ENCODE measurements at regions of chr5 and their contacts with region 1.

Region 1: DNA sequence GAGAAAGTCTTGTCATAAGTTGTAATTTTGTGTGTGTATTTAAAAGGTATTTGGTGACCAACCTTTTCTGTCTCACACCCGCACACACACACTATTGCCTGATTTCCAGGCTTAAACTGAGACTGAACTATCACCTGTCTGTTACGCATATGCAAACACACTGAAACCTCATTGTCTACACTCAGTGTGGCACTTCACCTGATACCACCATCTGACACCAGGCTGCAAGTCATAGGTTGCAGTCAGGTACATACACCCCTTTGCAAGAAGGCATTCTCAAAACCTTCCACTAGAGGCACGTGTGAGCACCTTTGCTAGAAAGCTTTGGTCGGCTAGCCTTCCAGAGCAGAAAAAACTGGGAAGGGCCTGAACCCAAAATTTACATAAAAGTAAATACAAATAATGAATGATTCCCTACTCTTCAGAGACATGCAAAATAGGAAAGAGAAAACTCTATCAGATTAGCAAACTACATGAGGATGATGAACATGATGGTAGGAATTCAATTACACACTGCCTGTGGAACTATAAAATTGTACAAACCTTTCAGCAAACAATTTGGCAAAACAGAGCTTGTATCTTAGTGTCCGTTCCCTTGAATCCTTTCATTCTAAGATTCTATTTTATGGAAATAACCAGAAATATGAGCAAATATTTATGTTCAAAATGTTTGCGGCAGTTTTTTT is 5.9 kb upstream of the FOXD1 start:
- DNase-seq: peak; percentile 67
- ATAC-seq: peak; percentile 88
- H3K4me3 ChIP-seq: no peak overlapping the region
- H3K27ac ChIP-seq: no peak overlapping the region
- H3K4me1 ChIP-seq: peaks cover 12% of the 10 kb centered on the region; the same call in 1 of the 2 replicates
- H3K27me3 ChIP-seq: peaks cover 6 to 50% of the 10 kb centered on the region in 2 experiments
- CTCF ChIP-seq: peak; percentile 69
- EP300 ChIP-seq: no peak
- POLR2A ChIP-seq: no peak
- RAD21 ChIP-seq: no peak

Region 2: DNA sequence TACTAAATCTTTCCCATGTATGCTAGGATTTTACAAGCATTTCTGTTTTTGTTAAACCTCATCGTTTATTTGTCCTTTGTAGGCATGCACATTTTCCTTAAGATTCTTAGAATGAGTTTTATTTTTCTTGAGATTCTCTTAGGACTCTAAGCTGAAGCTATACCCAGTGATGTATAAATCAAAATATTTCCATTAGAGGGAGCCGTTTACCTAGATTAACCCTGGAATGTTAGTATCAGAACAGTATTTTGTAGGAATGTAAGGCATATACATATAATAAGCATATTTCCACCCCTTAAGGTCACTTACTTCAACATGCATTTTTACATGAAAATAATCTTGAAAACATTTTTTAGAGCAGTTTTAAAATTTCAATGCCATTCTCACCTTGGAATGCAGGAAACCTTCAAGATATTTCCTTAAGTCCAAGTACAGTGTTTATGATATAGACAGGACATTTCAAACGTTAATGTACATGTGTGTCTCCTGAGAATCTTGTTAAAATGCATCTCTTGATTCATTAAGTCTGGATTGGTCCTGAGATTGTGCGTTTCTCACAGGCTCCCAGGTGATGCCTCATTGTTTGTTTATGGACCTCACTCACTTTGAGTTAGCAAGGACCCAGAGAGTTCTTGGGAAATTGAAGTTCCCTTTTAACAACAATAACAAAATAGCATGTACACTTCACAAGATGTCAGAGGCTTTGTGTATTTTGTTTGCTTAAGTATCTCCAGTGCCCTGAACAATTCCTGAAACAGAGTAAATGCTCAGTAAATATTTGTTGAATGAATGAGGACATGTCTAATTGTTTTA is 533.6 kb before region 1 on chr5:
- CTCF ChIA-PET with region 1: no interaction called
- POLR2A ChIA-PET with region 1: no interaction called
- in situ Hi-C with region 1: no loop called
- intact Hi-C with region 1: loop called (anchors 5 kb)
- DNase-seq: no peak
- ATAC-seq: peak; percentile 68
- H3K4me3 ChIP-seq: no peak overlapping the region
- H3K27ac ChIP-seq: no peak overlapping the region
- H3K4me1 ChIP-seq: no peaks in the 10 kb centered on the region
- H3K27me3 ChIP-seq: no peaks in the 10 kb centered on the region
- CTCF ChIP-seq: peak; percentile 45
- EP300 ChIP-seq: no peak
- POLR2A ChIP-seq: no peak
- RAD21 ChIP-seq: no peak

Region 3: GRCh38 chr5:73081093-73081492 is 373.4 kb before region 1 on chr5:
- CTCF ChIA-PET with region 1: interaction called, 3 read pairs
- POLR2A ChIA-PET with region 1: no interaction called
- in situ Hi-C with region 1: no loop called
- intact Hi-C with region 1: loop called (anchors 5 kb)
- DNase-seq: no peak
- ATAC-seq: no peak
- H3K4me3 ChIP-seq: no peak overlapping the region
- H3K27ac ChIP-seq: no peak overlapping the region
- H3K4me1 ChIP-seq: no peaks in the 10 kb centered on the region
- H3K27me3 ChIP-seq: no peaks in the 10 kb centered on the region
- CTCF ChIP-seq: no peak
- EP300 ChIP-seq: no peak
- POLR2A ChIP-seq: no peak
- RAD21 ChIP-seq: no peak

Region 4: DNA sequence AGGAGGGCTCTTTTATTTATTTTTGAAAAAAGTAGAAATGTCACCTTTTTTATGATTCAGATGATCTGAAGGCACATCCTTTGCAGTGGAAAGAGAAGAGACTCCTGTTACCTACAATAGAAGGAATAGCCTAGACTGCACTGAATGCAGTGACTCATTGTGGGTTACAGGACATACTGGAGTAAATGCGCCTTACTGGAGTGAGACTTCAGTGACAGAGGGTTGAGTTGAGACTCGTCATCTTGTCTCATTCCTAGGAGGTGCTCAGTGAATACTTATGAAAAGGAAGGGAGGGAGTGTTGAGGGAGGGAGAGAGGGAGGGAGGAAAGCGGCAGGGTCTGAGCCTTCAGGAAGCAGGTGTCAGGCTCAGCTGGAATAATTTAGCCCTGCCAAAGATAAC is 85.7 kb after region 1 on chr5:
- CTCF ChIA-PET with region 1: no interaction called
- POLR2A ChIA-PET with region 1: no interaction called
- in situ Hi-C with region 1: no loop called
- intact Hi-C with region 1: no loop called
- DNase-seq: peak; percentile 50
- ATAC-seq: no peak
- H3K4me3 ChIP-seq: no peak overlapping the region
- H3K27ac ChIP-seq: no peak overlapping the region
- H3K4me1 ChIP-seq: peaks cover 67% of the 10 kb centered on the region
- H3K27me3 ChIP-seq: no peaks in the 10 kb centered on the region
- CTCF ChIP-seq: no peak
- EP300 ChIP-seq: no peak
- POLR2A ChIP-seq: no peak
- RAD21 ChIP-seq: no peak